Activated B cell treated with CpG ODN at 0.5 μM for 24 hours (primary cell): ENCODE measurements at regions of chr9 and their contacts with region 1.

Region 1: DNA sequence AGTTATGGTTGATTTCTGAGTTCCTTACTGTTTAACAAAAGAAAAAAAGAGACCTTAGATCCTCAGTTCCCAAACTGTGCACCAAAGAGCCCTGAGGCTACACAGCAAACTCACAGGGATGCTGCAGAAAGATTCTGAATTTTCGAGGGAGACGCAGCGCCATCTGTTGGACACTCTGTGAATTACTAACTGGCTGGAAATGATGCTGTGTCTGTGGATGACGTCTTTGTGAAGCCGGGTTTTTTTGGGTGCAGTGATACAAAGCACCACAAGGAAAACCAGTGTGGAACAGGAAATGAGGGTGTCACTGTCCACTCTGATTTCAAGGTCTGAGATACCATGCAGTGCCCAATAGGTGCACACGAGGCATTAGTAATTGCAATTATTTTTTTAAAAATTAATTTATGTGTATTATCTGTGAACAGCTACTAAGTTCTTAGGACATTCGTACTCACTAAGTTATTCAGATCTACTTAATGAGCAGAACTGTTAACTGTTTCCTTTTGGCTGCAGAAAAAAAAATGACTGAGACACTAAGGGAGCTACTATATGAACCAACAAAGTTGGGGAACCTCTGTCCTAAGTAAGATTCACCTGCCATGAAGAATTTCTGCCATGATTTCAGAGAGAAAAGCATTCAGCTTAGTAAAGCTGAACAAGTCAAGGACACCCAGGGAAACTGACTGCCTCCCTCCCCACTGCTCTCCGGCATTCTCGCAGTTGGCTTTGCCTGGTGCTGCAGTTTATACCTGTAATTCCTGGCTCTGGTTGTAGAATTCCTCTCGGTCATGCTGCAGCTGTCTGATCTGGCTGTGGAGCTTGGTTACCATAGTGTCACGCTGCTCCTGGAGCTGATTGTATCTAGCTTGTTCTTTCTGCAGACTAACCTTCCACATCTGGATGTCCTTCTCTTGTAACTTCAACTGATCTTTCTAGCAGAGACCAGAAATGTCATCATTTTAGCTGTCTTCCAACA is 23.4 kb downstream of the SPACA9 start:
- DNase-seq: peak; percentile 57
- ATAC-seq: peak; percentile 98
- H3K4me3 Mint-ChIP-seq: no peak overlapping the region
- H3K27ac Mint-ChIP-seq: no peak overlapping the region
- H3K4me1 Mint-ChIP-seq: peaks cover 5% of the 10 kb centered on the region
- H3K27me3 Mint-ChIP-seq: no peaks in the 10 kb centered on the region
- CTCF ChIP-seq: peak; percentile 54

Region 2: GRCh38 chr9:132135456-132135855 is 766.7 kb before region 1 on chr9:
- CTCF ChIA-PET with region 1: no interaction called
- POLR2A ChIA-PET with region 1: no interaction called
- intact Hi-C with region 1: no loop called
- DNase-seq: no peak
- ATAC-seq: no peak
- H3K4me3 Mint-ChIP-seq: no peak overlapping the region
- H3K27ac Mint-ChIP-seq: no peak overlapping the region
- H3K4me1 Mint-ChIP-seq: no peaks in the 10 kb centered on the region
- H3K27me3 Mint-ChIP-seq: peaks cover 58% of the 10 kb centered on the region
- CTCF ChIP-seq: no peak

Region 3: GRCh38 chr9:132849185-132849706 is 52.9 kb before region 1 on chr9:
- CTCF ChIA-PET with region 1: interaction called, 37 read pairs
- POLR2A ChIA-PET with region 1: interaction called, 12 read pairs
- intact Hi-C with region 1: loop called (anchors 1 kb)
- DNase-seq: no peak
- ATAC-seq: no peak
- H3K4me3 Mint-ChIP-seq: peak overlapping the region; percentile 68
- H3K27ac Mint-ChIP-seq: peak overlapping the region; percentile 75
- H3K4me1 Mint-ChIP-seq: peaks cover 32% of the 10 kb centered on the region
- H3K27me3 Mint-ChIP-seq: no peaks in the 10 kb centered on the region
- CTCF ChIP-seq: no peak

Region 4: DNA sequence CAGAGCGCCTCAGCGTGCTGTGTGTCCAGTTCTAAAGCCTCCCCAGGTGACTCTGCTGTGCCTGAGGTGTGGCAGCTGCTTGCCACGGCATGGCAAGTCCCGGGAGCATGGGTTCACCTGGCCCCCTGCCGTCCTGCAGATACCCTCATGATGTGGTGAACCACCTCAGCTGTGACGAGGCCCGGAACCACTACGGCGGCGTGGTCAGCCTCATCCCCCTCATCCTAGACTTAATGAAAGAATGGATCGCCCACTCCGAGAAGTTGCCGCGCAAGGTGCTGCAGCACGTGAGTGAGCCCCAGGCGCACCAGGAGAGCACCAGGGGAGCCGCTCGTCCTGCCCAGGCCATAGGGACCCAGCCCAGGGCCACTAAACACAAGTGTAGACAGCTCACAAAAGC is 14.0 kb before region 1 on chr9:
- CTCF ChIA-PET with region 1: interaction called, 6 read pairs
- POLR2A ChIA-PET with region 1: interaction called, 3 read pairs
- intact Hi-C with region 1: loop called (anchors 2 kb)
- DNase-seq: no peak
- ATAC-seq: peak; percentile 30
- H3K4me3 Mint-ChIP-seq: no peak overlapping the region
- H3K27ac Mint-ChIP-seq: peak overlapping the region; percentile 92
- H3K4me1 Mint-ChIP-seq: peaks cover 50% of the 10 kb centered on the region
- H3K27me3 Mint-ChIP-seq: no peaks in the 10 kb centered on the region
- CTCF ChIP-seq: no peak